MCF 10A (cell line): ENCODE measurements at regions of chr2 and their contacts with region 1.

Region 1: DNA sequence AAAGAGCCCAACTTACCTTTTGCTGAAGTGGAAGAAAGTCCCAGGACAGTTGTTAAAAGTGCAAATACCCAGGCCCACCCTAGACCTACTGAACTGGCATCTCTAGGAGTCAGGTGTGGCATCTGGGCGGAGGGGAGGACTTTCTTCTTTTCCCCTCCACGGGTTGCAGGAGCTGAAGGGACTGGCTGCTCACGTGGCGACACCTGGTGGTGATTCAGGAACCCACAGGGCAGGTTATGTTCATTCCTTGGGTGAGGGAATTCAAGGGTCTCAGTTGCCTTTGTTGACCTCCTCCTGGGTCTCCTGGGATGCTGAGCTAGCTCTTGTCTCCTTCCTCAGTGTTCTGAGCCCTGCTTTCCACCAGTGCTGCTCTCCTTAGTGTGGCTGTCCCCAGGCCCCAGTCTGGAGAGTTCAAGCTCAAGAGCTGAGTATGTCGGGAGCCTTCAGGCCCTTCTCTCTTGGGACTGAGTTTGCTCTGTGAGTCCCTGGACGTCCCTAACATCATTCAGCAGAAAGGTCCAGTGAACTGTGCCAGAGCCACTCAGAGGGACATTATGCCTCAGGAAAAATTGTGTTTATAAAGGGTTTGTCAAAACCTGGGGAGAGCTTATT is 56.9 kb downstream of the DYSF start:
- DNase-seq: peak; percentile 69
- H3K4me3 Mint-ChIP-seq: no peak overlapping the region
- H3K27ac Mint-ChIP-seq: no peak overlapping the region
- H3K4me1 Mint-ChIP-seq: no peaks in the 10 kb centered on the region
- H3K27me3 Mint-ChIP-seq: no peaks in the 10 kb centered on the region
- CTCF ChIP-seq: peak; percentile 89

Region 2: GRCh38 chr2:71226965-71227560 is 283.2 kb before region 1 on chr2 and contains the start of gene PAIP2B:
- CTCF ChIA-PET with region 1: interaction called, 4 read pairs
- POLR2A ChIA-PET with region 1: interaction called, 3 read pairs
- intact Hi-C with region 1: loop called (anchors 2 kb)
- DNase-seq: peak; percentile 99
- H3K4me3 Mint-ChIP-seq: peak within 1 kb of the TSS; percentile 93
- H3K27ac Mint-ChIP-seq: peak within 1 kb of the TSS; percentile 63
- H3K4me1 Mint-ChIP-seq: peaks cover 12% of the 10 kb centered on the region
- H3K27me3 Mint-ChIP-seq: peaks cover 12% of the 10 kb centered on the region
- CTCF ChIP-seq: no peak
- total RNA-seq, gene PAIP2B: 1.4 and 1.8 TPM in 2 replicates

Region 3: GRCh38 chr2:71306762-71307161 is 203.5 kb before region 1 on chr2:
- CTCF ChIA-PET with region 1: interaction called, 14 read pairs
- POLR2A ChIA-PET with region 1: no interaction called
- intact Hi-C with region 1: no loop called
- DNase-seq: peak; percentile 17
- H3K4me3 Mint-ChIP-seq: no peak overlapping the region
- H3K27ac Mint-ChIP-seq: no peak overlapping the region
- H3K4me1 Mint-ChIP-seq: peaks cover 9% of the 10 kb centered on the region
- H3K27me3 Mint-ChIP-seq: no peaks in the 10 kb centered on the region
- CTCF ChIP-seq: no peak

Region 4: DNA sequence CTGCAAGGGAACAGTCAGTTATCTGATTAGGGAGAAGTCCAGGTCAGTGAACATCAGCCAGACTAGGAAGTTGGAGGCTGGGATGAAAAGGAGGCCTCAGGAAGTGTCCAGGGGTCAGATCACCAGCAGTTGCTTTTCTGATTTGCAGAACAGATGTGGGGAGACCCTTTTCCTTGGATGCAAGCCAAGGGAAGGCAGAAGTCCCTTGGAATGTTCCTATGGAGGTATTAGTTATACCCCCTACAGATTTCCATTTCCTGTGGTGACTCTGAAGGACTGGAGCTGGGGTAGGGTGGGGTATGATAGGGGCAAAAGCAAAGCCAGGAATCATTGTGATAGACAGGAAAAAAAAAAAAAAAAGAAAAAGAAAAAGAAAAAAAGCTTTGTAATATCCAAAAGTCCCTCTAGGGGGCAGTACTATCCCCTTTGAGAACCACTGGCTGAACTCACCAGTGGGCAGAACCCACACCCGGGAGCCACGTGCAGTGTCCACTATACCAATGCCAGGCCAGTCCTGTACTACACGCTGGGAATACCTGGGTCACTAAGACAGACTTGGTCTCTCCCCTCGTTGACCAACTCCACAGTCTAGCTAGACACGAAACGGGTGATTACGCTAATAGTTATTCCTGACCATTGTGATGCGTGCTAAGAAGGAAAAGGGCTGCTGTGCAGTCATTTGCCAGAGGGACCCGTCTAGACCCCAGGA is 49.6 kb before region 1 on chr2:
- CTCF ChIA-PET with region 1: interaction called, 21 read pairs
- POLR2A ChIA-PET with region 1: no interaction called
- intact Hi-C with region 1: loop called (anchors 1 kb)
- DNase-seq: no peak
- H3K4me3 Mint-ChIP-seq: no peak overlapping the region
- H3K27ac Mint-ChIP-seq: no peak overlapping the region
- H3K4me1 Mint-ChIP-seq: peaks cover 13% of the 10 kb centered on the region
- H3K27me3 Mint-ChIP-seq: no peaks in the 10 kb centered on the region
- CTCF ChIP-seq: peak; percentile 59

Region 5: GRCh38 chr2:71524476-71524875 is 14.2 kb after region 1 on chr2:
- CTCF ChIA-PET with region 1: interaction called, 11 read pairs
- POLR2A ChIA-PET with region 1: no interaction called
- intact Hi-C with region 1: no loop called
- DNase-seq: peak; percentile 13
- H3K4me3 Mint-ChIP-seq: no peak overlapping the region
- H3K27ac Mint-ChIP-seq: no peak overlapping the region
- H3K4me1 Mint-ChIP-seq: no peaks in the 10 kb centered on the region
- H3K27me3 Mint-ChIP-seq: peaks cover 32% of the 10 kb centered on the region
- CTCF ChIP-seq: no peak

Region 6: GRCh38 chr2:71662611-71663394 is 152.5 kb after region 1 on chr2:
- CTCF ChIA-PET with region 1: no interaction called
- POLR2A ChIA-PET with region 1: no interaction called
- intact Hi-C with region 1: no loop called
- DNase-seq: no peak
- H3K4me3 Mint-ChIP-seq: no peak overlapping the region
- H3K27ac Mint-ChIP-seq: no peak overlapping the region
- H3K4me1 Mint-ChIP-seq: no peaks in the 10 kb centered on the region
- H3K27me3 Mint-ChIP-seq: no peaks in the 10 kb centered on the region
- CTCF ChIP-seq: no peak

Region 7: GRCh38 chr2:71778936-71779773 is 268.9 kb after region 1 on chr2:
- CTCF ChIA-PET with region 1: no interaction called
- POLR2A ChIA-PET with region 1: no interaction called
- intact Hi-C with region 1: no loop called
- DNase-seq: peak; percentile 45
- H3K4me3 Mint-ChIP-seq: no peak overlapping the region
- H3K27ac Mint-ChIP-seq: no peak overlapping the region
- H3K4me1 Mint-ChIP-seq: peaks cover 8% of the 10 kb centered on the region
- H3K27me3 Mint-ChIP-seq: peaks cover 16% of the 10 kb centered on the region
- CTCF ChIP-seq: no peak

Region 8: DNA sequence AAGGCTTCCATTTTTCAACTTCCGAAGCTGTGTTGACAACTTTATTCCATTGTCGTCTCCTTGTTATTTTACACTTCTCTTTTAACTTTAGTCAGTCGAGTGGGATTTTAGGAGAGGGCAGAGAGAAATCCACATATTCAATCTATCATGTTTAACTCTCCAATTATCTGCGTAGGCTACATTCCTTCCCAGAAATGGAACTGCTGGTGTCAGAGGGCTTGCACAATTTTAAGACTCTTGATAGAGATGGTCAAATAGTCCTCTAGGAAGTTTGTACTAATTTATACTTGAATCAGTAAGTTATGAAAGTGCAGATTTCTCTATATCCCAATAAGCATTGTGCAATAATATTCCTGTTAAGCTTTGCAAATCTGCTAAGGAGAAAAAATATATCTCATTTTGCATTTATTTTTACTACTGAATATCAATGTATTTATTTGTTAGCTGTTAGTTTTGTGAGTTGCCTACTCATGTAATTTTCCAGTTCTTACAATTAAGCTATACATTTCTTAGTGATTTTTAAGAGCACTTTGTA is 541.7 kb after region 1 on chr2:
- CTCF ChIA-PET with region 1: no interaction called
- POLR2A ChIA-PET with region 1: no interaction called
- intact Hi-C with region 1: no loop called
- DNase-seq: no peak
- H3K4me3 Mint-ChIP-seq: no peak overlapping the region
- H3K27ac Mint-ChIP-seq: no peak overlapping the region
- H3K4me1 Mint-ChIP-seq: no peaks in the 10 kb centered on the region
- H3K27me3 Mint-ChIP-seq: no peaks in the 10 kb centered on the region
- CTCF ChIP-seq: no peak

Region 9: DNA sequence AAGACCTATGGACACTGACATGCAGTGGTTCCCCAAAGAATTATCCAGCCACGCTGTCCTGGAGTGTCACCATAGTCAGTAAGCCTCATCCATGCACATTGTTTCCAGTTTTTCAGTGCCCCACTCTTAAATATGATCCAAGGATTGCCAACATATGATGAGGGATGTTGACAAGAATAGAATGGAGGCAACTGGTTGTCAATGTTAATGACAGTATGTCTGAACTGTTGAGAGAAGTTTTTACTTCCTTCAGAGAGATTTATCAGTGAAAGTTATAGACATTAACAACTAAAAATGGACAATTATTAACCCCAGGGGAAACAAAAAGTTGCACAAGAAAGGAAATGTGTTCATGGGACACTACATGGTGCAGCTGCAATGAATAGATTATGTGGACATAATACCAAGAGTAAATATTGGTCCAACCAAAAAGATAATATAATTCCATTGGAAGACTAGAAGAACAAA is 567.4 kb after region 1 on chr2:
- CTCF ChIA-PET with region 1: no interaction called
- POLR2A ChIA-PET with region 1: no interaction called
- intact Hi-C with region 1: no loop called
- DNase-seq: no peak
- H3K4me3 Mint-ChIP-seq: no peak overlapping the region
- H3K27ac Mint-ChIP-seq: no peak overlapping the region
- H3K4me1 Mint-ChIP-seq: no peaks in the 10 kb centered on the region
- H3K27me3 Mint-ChIP-seq: no peaks in the 10 kb centered on the region
- CTCF ChIP-seq: no peak